T-cell (primary cell): ENCODE measurements at regions of chr7 and their contacts with region 1.

Region 1: DNA sequence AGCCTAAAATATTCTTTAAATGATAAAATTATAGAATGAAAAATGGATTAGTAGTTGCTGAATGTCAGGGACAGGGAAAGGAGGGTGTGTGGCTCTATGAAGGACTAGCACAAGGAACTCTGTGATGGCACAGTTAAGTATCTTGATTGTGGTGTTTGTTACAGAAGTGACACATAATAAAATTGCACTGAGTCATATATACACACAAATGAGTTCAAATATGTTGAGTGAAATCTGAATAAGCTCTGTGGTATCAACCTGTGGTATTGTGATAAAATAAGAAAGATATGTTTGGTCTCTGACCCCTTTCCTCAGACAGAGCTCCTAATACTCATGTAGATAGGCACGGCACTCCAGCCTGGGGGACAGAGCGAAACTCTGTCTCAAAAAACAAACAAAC is 181.5 kb upstream of the TRIM24 start:
- DNase-seq: no peak
- ATAC-seq: no peak
- H3K4me3 ChIP-seq: no peak overlapping the region
- H3K4me3 Mint-ChIP-seq: no peak overlapping the region
- H3K27ac ChIP-seq: no peak overlapping the region
- H3K27ac Mint-ChIP-seq: no peak overlapping the region
- H3K4me1 ChIP-seq: no peaks in the 10 kb centered on the region
- H3K4me1 Mint-ChIP-seq: no peaks in the 10 kb centered on the region
- H3K27me3 ChIP-seq: no peaks in the 10 kb centered on the region
- H3K27me3 Mint-ChIP-seq: no peaks in the 10 kb centered on the region

Region 2: DNA sequence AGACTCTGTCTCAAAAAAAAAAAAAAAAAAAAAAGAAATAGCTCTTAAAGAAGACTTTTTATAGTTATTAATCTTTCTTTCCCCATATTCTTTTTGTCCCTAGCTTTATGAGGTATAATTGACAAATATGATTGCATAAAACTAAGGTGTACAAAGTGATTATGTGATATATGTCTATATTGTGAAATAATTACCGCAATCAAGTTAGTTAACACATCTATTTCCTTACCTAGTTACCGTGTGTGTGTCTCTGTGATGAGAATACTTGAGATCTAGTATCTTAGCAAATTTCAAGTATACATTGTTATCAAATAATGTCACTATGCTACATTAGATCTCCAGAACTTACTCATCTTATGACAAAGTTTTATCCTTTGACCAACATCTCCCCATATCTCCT is 921.8 kb after region 1 on chr7:
- CTCF ChIA-PET with region 1: no interaction called
- POLR2A ChIA-PET with region 1: interaction called in 1 of 2 experiments, 17 read pairs
- DNase-seq: no peak
- ATAC-seq: no peak
- H3K4me3 ChIP-seq: no peak overlapping the region
- H3K4me3 Mint-ChIP-seq: no peak overlapping the region
- H3K27ac ChIP-seq: no peak overlapping the region
- H3K27ac Mint-ChIP-seq: no peak overlapping the region
- H3K4me1 ChIP-seq: no peaks in the 10 kb centered on the region
- H3K4me1 Mint-ChIP-seq: no peaks in the 10 kb centered on the region
- H3K27me3 ChIP-seq: peaks cover 0 to 3% of the 10 kb centered on the region in 2 experiments
- H3K27me3 Mint-ChIP-seq: no peaks in the 10 kb centered on the region